ENCODE measurements at regions of chr9 and their contacts with region 1.

Region 1: DNA sequence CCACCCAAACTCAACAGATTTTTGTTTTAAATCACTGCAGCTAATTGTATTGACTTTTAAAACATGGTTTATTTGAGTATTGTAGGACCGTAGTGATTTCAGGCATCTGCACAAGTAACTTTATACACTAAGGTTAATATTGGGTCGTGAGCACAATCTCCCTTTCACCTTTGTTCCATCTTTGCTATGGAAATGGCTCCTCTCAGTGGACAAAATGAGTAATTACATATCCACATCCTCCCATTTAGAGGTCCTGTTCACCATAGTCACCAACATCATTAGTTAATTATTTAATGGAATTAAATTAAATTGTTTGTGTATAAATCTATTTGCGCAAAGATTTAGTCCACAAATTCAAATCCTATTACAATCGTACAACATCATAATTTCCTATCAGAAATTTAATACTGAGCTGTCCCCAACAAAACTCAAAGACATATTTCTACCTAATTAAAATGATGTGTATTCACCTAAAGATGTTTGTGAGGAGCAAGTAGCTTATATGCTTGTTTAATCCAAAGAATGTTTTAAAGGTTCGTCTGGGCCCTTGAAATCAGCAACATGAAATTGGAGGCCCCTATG is 173.0 kb upstream of the DAPK1 start:
- DNase-seq: no peak
- ATAC-seq: peak; percentile 83
- H3K4me3 ChIP-seq: no peak overlapping the region
- H3K27ac ChIP-seq: no peak overlapping the region
- H3K4me1 ChIP-seq: no peaks in the 10 kb centered on the region
- H3K27me3 ChIP-seq: no peaks in the 10 kb centered on the region

Region 2: GRCh38 chr9:86434039-86434726 is 890.5 kb before region 1 on chr9:
- intact Hi-C with region 1: loop called (anchors 5 to 10 kb)
- DNase-seq: peak in 1 of 2 donors; percentile 66
- ATAC-seq: peak; percentile 79
- H3K4me3 ChIP-seq: no peak overlapping the region
- H3K27ac ChIP-seq: no peak overlapping the region
- H3K4me1 ChIP-seq: no peaks in the 10 kb centered on the region
- H3K27me3 ChIP-seq: no peaks in the 10 kb centered on the region

Region 3: DNA sequence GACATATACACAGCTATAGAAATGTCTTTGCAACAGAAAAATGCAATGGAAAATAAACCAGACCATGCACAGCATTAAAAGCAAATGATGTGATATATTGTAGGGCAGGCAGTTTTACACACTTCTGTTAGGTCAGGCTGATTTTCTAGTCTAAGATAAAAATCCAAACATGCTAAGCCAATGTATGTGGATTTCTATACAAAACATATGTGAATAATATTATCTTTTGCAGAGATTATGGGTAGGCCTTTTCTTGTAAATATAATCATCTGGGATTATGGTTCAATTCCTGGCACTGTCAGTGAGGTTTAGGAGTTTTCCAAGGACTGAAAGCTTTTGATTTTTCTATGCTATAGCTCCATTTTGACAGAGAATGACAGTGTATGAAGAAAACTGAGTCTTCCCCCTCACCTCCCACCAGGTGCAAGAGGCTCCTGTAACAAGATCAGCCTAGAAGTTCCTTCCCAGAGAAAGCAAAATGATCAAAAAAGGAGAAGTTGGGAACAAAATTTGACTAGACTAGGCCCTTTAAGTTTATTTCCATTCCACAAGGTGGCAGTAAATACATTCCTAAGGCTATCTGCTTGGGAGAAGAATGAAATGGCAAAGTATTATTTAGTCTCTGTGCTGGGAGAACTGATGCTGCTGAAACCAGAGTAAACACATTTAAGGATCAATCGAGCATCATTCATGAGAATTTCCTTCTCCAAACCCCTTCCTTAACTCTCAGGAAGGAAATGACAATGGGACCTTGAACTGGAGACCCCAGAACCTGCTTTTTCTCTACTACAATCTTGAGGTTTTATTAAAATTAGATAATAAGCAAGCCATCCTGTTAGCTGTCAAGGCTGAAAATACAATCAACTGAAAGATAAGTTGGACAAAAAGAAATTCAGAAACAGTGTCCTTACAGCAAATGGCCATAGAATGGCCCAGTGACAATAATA is 837.5 kb before region 1 on chr9:
- intact Hi-C with region 1: loop called (anchors 2 kb)
- DNase-seq: no peak
- ATAC-seq: peak; percentile 79
- H3K4me3 ChIP-seq: no peak overlapping the region
- H3K27ac ChIP-seq: no peak overlapping the region
- H3K4me1 ChIP-seq: no peaks in the 10 kb centered on the region
- H3K27me3 ChIP-seq: no peaks in the 10 kb centered on the region

Region 4: GRCh38 chr9:86637515-86637914 is 687.2 kb before region 1 on chr9:
- intact Hi-C with region 1: loop called in 1 of 2 experiments (anchors 10 kb)
- DNase-seq: peak; percentile 50 to 80
- ATAC-seq: no peak
- H3K4me3 ChIP-seq: no peak overlapping the region
- H3K27ac ChIP-seq: no peak overlapping the region
- H3K4me1 ChIP-seq: no peaks in the 10 kb centered on the region
- H3K27me3 ChIP-seq: no peaks in the 10 kb centered on the region

Region 5: DNA sequence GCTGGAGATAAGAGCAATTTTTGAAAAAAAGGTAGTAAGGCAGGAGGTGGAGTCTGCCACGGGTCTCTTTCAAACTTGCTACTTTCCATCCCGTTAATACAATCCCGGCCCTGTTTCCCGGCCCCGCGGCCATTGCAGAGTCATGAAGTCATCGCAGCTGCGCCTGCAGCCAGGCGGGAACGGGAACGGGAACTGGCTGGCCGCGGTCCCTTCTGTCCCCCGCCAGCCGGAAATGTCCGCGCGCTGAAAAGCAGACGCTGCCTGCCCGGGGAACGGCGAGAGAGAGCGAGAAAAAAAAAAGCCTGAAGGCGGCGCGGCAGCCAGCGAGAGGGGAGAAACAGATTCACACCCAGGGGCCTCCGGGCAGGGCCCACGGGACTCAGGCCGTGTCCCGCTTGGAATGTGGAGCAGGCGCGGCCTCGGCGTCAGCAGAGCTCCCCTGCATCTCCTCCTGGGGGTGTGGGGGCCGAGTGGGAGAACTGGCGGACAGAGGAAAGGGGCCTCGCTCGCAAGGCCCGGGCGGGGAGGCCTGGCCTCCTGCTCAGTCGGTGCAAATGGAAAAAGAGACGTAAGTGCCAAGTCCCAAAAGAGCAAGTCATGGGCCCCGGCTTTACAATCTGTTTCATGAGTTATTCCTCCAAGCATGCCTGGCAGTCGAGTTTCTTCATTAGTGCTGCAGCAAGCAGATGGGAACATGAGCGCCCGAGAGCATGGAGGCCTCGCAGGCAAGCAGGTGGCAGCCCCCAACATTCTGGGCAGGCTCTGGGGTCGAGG is 176.2 kb before region 1 on chr9:
- intact Hi-C with region 1: loop called in 1 of 2 experiments (anchors 5 kb)
- DNase-seq: peak; percentile 94 to 95
- ATAC-seq: peak; percentile 95
- H3K4me3 ChIP-seq: no peak overlapping the region
- H3K27ac ChIP-seq: peak overlapping the region; percentile 98 to 99
- H3K4me1 ChIP-seq: peaks cover 0 to 3% of the 10 kb centered on the region in 2 donors
- H3K27me3 ChIP-seq: no peaks in the 10 kb centered on the region

Region 6: GRCh38 chr9:87233899-87234455 is 90.7 kb before region 1 on chr9:
- intact Hi-C with region 1: no loop called
- DNase-seq: no peak
- ATAC-seq: no peak
- H3K4me3 ChIP-seq: no peak overlapping the region
- H3K27ac ChIP-seq: no peak overlapping the region
- H3K4me1 ChIP-seq: peaks cover under 1 to 3% of the 10 kb centered on the region in 2 donors
- H3K27me3 ChIP-seq: no peaks in the 10 kb centered on the region

Region 7: DNA sequence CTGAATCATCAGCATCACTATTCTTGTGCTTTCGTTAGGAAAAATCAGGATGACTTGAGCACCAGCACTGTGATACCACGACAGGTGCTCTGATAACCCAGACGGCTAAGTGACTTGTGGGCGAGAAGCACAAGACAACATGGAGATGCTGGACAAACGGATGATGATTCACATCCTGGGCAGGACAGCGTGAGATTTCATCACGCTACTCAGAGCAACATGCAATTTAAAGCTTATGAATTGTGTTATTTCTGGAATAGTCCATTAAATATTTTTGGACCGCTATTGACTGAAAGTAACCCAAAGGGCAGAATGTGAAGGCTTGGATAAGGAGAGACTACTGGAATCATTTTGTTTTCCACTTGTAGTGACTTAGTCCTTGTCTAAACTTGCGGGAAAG is 58.2 kb after region 1 on chr9:
- intact Hi-C with region 1: no loop called
- DNase-seq: peak in 1 of 2 donors; percentile 58
- ATAC-seq: peak; percentile 63
- H3K4me3 ChIP-seq: no peak overlapping the region
- H3K27ac ChIP-seq: no peak overlapping the region
- H3K4me1 ChIP-seq: no peaks in the 10 kb centered on the region
- H3K27me3 ChIP-seq: no peaks in the 10 kb centered on the region